IMR-90 (cell line): ENCODE measurements at regions of chr6 and their contacts with region 1.

Region 1: GRCh38 chr6:105382958-105383357 is 19.9 kb downstream of the PREP start:
- DNase-seq: no peak
- ATAC-seq: no peak
- H3K4me3 ChIP-seq: no peak overlapping the region
- H3K27ac ChIP-seq: no peak overlapping the region
- H3K4me1 ChIP-seq: peaks cover 5% of the 10 kb centered on the region; the same call in 1 of the 2 replicates
- H3K27me3 ChIP-seq: no peaks in the 10 kb centered on the region
- CTCF ChIP-seq: no peak
- POLR2A ChIP-seq: no peak
- RAD21 ChIP-seq: no peak

Region 2: GRCh38 chr6:105294129-105294528 is 88.8 kb before region 1 on chr6:
- CTCF ChIA-PET with region 1: no interaction called
- POLR2A ChIA-PET with region 1: interaction called, 16 read pairs
- dilution Hi-C with region 1: no loop called
- in situ Hi-C with region 1: no loop called
- intact Hi-C with region 1: no loop called
- DNase-seq: no peak
- ATAC-seq: no peak
- H3K4me3 ChIP-seq: no peak overlapping the region
- H3K27ac ChIP-seq: no peak overlapping the region
- H3K4me1 ChIP-seq: no peaks in the 10 kb centered on the region
- H3K27me3 ChIP-seq: no peaks in the 10 kb centered on the region
- CTCF ChIP-seq: no peak
- POLR2A ChIP-seq: no peak
- RAD21 ChIP-seq: no peak

Region 3: GRCh38 chr6:105346052-105346451 is 36.9 kb before region 1 on chr6:
- CTCF ChIA-PET with region 1: no interaction called
- POLR2A ChIA-PET with region 1: no interaction called
- dilution Hi-C with region 1: no loop called
- in situ Hi-C with region 1: no loop called
- intact Hi-C with region 1: loop called (anchors 1 kb)
- DNase-seq: peak; percentile 93
- ATAC-seq: peak; percentile 99
- H3K4me3 ChIP-seq: no peak overlapping the region
- H3K27ac ChIP-seq: no peak overlapping the region
- H3K4me1 ChIP-seq: peaks cover 4% of the 10 kb centered on the region; the same call in 1 of the 2 replicates
- H3K27me3 ChIP-seq: no peaks in the 10 kb centered on the region
- CTCF ChIP-seq: no peak
- POLR2A ChIP-seq: no peak
- RAD21 ChIP-seq: no peak

Region 4: DNA sequence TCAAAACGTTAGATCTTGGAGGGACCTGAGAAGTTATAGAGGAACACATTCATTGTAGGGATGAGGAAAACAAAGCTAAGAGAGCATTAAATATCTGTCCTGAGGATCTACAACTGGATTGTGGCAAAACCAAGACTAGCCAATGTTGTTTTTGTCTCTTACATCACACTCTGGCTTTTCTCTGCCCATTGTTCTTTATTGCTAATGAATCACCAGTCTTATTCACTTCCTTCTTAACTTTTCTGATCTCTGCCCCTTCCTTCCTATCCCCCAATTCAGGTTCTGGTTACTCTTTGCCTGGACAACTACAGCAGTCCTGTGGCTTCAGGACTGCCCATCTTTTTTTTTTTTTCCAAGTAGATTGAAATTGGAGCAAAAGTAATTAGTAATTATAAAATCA is 76.9 kb after region 1 on chr6:
- CTCF ChIA-PET with region 1: no interaction called
- POLR2A ChIA-PET with region 1: no interaction called
- dilution Hi-C with region 1: no loop called
- in situ Hi-C with region 1: no loop called
- intact Hi-C with region 1: no loop called
- DNase-seq: peak; percentile 35
- ATAC-seq: no peak
- H3K4me3 ChIP-seq: no peak overlapping the region
- H3K27ac ChIP-seq: no peak overlapping the region
- H3K4me1 ChIP-seq: peaks cover 2% of the 10 kb centered on the region; the same call in 1 of the 2 replicates
- H3K27me3 ChIP-seq: no peaks in the 10 kb centered on the region; the same call in 1 of the 2 replicates
- CTCF ChIP-seq: no peak
- POLR2A ChIP-seq: no peak
- RAD21 ChIP-seq: no peak

Region 5: DNA sequence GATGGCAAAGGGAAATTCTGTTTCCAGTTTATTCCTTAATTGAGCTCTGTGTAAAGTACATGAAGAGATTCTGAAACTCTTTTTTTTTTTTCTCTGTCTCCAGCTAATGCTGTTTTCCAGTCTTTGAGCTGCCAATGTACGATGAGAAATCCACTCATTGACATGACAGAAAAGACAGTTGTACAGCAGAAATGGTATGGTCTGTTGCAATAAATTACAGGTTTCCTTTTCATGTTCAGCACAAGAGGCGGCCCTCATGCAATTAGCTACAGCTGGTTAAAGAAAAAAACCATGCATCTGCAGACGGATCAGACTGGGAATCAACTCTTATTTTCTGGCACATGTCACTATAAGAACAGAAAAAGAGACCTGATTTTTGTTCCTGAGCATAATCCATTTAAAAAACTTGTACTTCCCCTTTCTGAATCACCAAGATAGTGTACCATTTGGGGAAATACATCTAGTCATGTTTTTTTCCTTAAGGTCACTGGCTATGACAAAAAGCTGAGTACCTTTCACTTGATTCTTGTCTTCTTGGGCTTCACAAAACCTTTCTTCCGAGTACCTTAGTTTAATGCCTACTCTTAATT is 309.8 kb after region 1 on chr6:
- CTCF ChIA-PET with region 1: no interaction called
- POLR2A ChIA-PET with region 1: no interaction called
- dilution Hi-C with region 1: no loop called
- in situ Hi-C with region 1: no loop called
- intact Hi-C with region 1: no loop called
- DNase-seq: no peak
- ATAC-seq: no peak
- H3K4me3 ChIP-seq: no peak overlapping the region
- H3K27ac ChIP-seq: no peak overlapping the region
- H3K4me1 ChIP-seq: no peaks in the 10 kb centered on the region; the same call in 1 of the 2 replicates
- H3K27me3 ChIP-seq: no peaks in the 10 kb centered on the region
- CTCF ChIP-seq: no peak
- POLR2A ChIP-seq: no peak
- RAD21 ChIP-seq: no peak